Sigmoid colon (tissue), 7 donors: ENCODE measurements at regions of chr12 and their contacts with region 1.

Region 1: GRCh38 chr12:94262228-94263010 is 114.0 kb downstream of the PLXNC1 start:
- DNase-seq: peak; percentile 95
- H3K4me3 ChIP-seq: peak overlapping the region; percentile 42 to 59 (median 51)
- H3K27ac ChIP-seq: peak overlapping the region; percentile 82 to 85 (median 84)
- H3K4me1 ChIP-seq: peaks cover 0 to 28% (median 23%) of the 10 kb centered on the region in 4 donors
- H3K27me3 ChIP-seq: no peaks in the 10 kb centered on the region
- CTCF ChIP-seq: no peak
- EP300 ChIP-seq: peak in 2 of 4 donors; percentile 51 to 83
- POLR2A ChIP-seq: no peak

Region 2: DNA sequence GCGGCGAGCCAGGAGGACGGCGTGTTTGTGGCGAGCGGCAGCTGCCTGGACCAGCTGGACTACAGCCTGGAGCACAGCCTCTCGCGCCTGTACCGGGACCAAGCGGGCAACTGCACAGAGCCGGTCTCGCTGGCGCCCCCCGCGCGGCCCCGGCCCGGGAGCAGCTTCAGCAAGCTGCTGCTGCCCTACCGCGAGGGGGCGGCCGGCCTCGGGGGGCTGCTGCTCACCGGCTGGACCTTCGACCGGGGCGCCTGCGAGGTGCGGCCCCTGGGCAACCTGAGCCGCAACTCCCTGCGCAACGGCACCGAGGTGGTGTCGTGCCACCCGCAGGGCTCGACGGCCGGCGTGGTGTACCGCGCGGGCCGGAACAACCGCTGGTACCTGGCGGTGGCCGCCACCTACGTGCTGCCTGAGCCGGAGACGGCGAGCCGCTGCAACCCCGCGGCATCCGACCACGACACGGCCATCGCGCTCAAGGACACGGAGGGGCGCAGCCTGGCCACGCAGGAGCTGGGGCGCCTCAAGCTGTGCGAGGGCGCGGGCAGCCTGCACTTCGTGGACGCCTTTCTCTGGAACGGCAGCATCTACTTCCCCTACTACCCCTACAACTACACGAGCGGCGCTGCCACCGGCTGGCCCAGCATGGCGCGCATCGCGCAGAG is 113.2 kb before region 1 on chr12:
- intact Hi-C with region 1: loop called (anchors 5 kb)
- DNase-seq: no peak
- H3K4me3 ChIP-seq: peak overlapping the region; percentile 18 to 70 (median 62)
- H3K27ac ChIP-seq: peak overlapping the region in 2 of 4 donors; percentile 32 to 34
- H3K4me1 ChIP-seq: peaks cover 0 to 27% (median 25%) of the 10 kb centered on the region in 4 donors
- H3K27me3 ChIP-seq: peaks cover 0 to 23% (median 15%) of the 10 kb centered on the region in 3 donors
- CTCF ChIP-seq: peak in 1 of 4 experiments; percentile 16
- EP300 ChIP-seq: no peak
- POLR2A ChIP-seq: no peak

Region 3: DNA sequence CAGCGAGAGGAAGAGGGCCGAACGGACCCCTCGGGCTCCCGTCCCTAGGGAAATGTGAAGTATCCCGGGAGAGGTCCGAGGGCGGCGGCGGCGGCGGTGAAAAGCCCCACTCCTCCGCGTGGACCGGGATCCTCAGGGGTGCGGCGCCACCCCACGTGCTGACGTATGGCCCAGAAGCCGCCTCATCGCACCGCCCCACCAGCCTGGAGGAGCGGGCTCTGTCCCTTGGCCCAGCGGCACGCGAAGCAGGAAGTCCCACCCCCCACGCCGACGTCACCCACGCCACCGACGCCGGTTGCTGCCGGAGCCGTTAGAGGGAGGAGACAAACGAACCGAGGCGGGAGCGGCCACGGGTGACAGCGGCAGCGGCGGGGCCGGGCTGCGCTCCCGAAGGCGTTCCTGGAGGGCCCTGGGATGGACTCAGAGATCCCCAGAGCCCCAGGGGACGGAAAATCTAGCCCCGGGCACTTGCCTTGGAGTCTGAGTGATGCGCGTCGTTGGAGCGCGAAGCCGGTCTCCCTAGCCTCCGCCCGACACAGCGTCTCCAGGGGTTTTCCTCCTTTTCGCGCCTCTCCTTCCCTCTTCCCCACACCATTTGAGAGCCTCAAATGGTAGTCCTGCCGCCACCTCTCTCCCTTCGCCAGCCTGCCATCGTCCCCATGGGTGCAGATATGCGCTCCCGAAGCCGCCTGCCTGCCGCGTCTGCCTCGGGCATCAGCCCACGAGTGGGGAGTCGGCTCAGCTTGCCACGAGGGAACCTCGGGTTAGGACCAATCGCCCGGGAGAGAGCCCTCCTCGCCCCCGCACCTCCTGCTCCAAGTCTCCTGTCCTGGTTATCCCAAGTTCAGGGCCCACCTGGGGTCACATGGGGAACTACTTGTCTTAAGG is 197.6 kb after region 1 on chr12 and contains the start of gene CEP83:
- intact Hi-C with region 1: loop called (anchors 2 kb)
- DNase-seq: peak; percentile 98
- H3K4me3 ChIP-seq: peak within 1 kb of the TSS; percentile 73 to 77 (median 76)
- H3K27ac ChIP-seq: peak within 1 kb of the TSS; percentile 91 to 95 (median 94)
- H3K4me1 ChIP-seq: peaks cover 0 to 23% (median 17%) of the 10 kb centered on the region in 4 donors
- H3K27me3 ChIP-seq: no peaks in the 10 kb centered on the region
- CTCF ChIP-seq: no peak
- EP300 ChIP-seq: no peak
- POLR2A ChIP-seq: peak; percentile 61 to 77
- total RNA-seq, gene CEP83: 7.9 to 23.5 (median 10.4) TPM